ENCODE measurements at regions of chr17 and their contacts with region 1.

Region 1: DNA sequence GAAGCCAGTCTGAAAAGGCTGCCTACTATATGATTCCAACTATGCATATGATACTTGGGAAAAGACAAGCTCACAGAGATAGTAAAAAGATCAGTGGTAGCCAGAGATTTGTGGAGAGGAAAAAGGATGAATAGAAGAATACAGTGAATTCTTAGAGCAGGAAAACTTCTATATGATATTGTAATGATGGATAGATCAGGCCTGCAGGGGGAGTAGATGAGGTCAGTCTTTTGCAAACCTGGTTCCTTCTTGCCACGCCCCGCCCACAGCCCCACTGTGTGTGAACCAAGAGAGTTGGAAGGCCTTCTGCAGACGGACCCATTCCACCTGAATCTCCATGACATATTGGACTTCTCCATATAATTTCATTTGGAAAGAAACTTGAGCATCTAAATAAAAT is 761 bp upstream of the CCL8 start:
- H3K4me3 ChIP-seq: no peak overlapping the region
- H3K27ac ChIP-seq: no peak overlapping the region
- H3K4me1 ChIP-seq: no peaks in the 10 kb centered on the region
- CTCF ChIP-seq: no peak

Region 2: DNA sequence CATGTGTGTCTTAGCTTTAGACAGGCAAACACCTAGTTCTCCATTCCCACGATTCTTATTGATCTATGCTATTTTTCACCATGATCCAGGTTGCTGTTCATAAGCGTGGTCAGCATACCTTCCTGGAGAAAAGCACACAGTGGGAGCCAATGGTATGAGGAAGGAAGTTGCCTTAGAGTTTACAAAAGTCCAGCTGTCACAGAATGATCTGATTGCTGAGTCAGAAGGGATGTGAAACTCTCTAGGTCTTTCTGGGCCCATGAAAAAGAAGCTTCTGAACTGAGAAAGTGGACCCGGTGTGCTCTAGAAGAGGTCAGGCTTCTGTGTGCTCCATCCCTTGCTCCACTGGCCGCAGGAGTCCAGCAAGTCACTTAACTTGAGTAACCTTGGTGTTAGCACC is 115.6 kb after region 1 on chr17:
- CTCF ChIA-PET with region 1: interaction called, 11 read pairs
- POLR2A ChIA-PET with region 1: no interaction called
- H3K4me3 ChIP-seq: no peak overlapping the region
- H3K27ac ChIP-seq: no peak overlapping the region
- H3K4me1 ChIP-seq: no peaks in the 10 kb centered on the region
- CTCF ChIP-seq: no peak